Panc1 (cell line): ENCODE measurements at regions of chr10 and their contacts with region 1.

Region 1: GRCh38 chr10:88366772-88367171 is 216.3 kb downstream of the RNLS start:
- DNase-seq: no peak
- ATAC-seq: no peak
- H3K4me3 ChIP-seq: no peak overlapping the region
- H3K27ac ChIP-seq: no peak overlapping the region
- H3K4me1 ChIP-seq: no peaks in the 10 kb centered on the region
- H3K27me3 ChIP-seq: no peaks in the 10 kb centered on the region
- CTCF ChIP-seq: no peak

Region 2: GRCh38 chr10:87721781-87722180 is 645.0 kb before region 1 on chr10:
- CTCF ChIA-PET with region 1: no interaction called
- POLR2A ChIA-PET with region 1: interaction called, 14 read pairs
- in situ Hi-C with region 1: no loop called
- intact Hi-C with region 1: no loop called
- DNase-seq: no peak
- ATAC-seq: no peak
- H3K4me3 ChIP-seq: no peak overlapping the region
- H3K27ac ChIP-seq: no peak overlapping the region
- H3K4me1 ChIP-seq: no peaks in the 10 kb centered on the region
- H3K27me3 ChIP-seq: no peaks in the 10 kb centered on the region
- CTCF ChIP-seq: no peak